ENCODE measurements at regions of chr18 and their contacts with region 1.

Region 1: GRCh38 chr18:74353169-74353775 is 37.6 kb downstream of the C18orf63 start:
- DNase-seq: peak; percentile 61
- H3K4me3 Mint-ChIP-seq: no peak overlapping the region
- H3K27ac Mint-ChIP-seq: no peak overlapping the region
- H3K4me1 Mint-ChIP-seq: no peaks in the 10 kb centered on the region
- H3K27me3 Mint-ChIP-seq: peaks cover 40% of the 10 kb centered on the region
- CTCF ChIP-seq: peak; percentile 55

Region 2: GRCh38 chr18:74370115-74370514 is 16.8 kb after region 1 on chr18:
- CTCF ChIA-PET with region 1: interaction called, 13 read pairs
- POLR2A ChIA-PET with region 1: no interaction called
- intact Hi-C with region 1: no loop called
- DNase-seq: no peak
- H3K4me3 Mint-ChIP-seq: no peak overlapping the region
- H3K27ac Mint-ChIP-seq: no peak overlapping the region
- H3K4me1 Mint-ChIP-seq: no peaks in the 10 kb centered on the region
- H3K27me3 Mint-ChIP-seq: peaks cover 40% of the 10 kb centered on the region
- CTCF ChIP-seq: no peak

Region 3: GRCh38 chr18:74546751-74547550 is 193.7 kb after region 1 on chr18:
- CTCF ChIA-PET with region 1: interaction called, 87 read pairs
- POLR2A ChIA-PET with region 1: interaction called, 4 read pairs
- intact Hi-C with region 1: loop called (anchors 1 kb)
- DNase-seq: peak; percentile 33
- H3K4me3 Mint-ChIP-seq: no peak overlapping the region
- H3K27ac Mint-ChIP-seq: no peak overlapping the region
- H3K4me1 Mint-ChIP-seq: peaks cover 20% of the 10 kb centered on the region
- H3K27me3 Mint-ChIP-seq: no peaks in the 10 kb centered on the region
- CTCF ChIP-seq: no peak

Region 4: GRCh38 chr18:74567822-74568221 is 214.6 kb after region 1 on chr18:
- CTCF ChIA-PET with region 1: interaction called, 11 read pairs
- POLR2A ChIA-PET with region 1: no interaction called
- intact Hi-C with region 1: no loop called
- DNase-seq: no peak
- H3K4me3 Mint-ChIP-seq: no peak overlapping the region
- H3K27ac Mint-ChIP-seq: no peak overlapping the region
- H3K4me1 Mint-ChIP-seq: no peaks in the 10 kb centered on the region
- H3K27me3 Mint-ChIP-seq: peaks cover 30% of the 10 kb centered on the region
- CTCF ChIP-seq: no peak